ENCODE measurements at regions of chr10 and their contacts with region 1.

Region 1: DNA sequence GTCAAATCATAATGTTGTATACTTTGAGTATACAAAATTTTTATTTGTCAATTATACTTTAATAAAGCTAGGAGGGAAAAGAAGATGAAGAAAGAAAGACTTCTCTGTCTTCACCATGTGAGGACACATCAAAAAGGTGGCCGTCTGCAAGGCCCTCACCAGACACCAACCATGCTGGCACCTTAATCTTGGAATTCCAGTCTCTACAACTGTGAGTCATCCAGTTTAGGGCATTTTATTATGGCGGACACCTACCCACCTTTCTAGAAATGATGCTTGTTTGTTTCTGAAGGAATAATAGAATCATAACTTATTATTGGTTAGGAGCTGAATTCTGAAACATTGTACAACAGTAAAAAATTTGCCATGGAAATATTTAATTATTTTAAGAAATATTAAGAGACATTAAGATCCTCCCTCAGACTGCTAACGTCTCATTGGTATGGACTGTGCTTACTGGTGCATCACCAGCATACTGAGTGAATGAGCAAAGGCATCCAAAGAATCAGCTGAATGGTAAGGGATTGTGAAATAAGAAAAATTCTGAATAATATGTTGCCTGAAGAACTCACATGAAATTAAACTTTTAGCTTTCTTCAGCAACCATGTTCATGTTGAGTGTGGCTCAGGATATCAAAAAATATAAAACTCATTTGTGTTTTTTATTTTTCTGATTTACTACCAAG is 536.6 kb downstream of the HTR7 start:
- DNase-seq: peak; percentile 71
- ATAC-seq: peak; percentile 92
- H3K4me3 ChIP-seq: no peak overlapping the region
- H3K27ac ChIP-seq: no peak overlapping the region; the same call in 1 of the 2 replicates
- H3K4me1 ChIP-seq: peaks cover 7% of the 10 kb centered on the region
- H3K27me3 ChIP-seq: no peaks in the 10 kb centered on the region
- CTCF ChIP-seq: no peak
- POLR2A ChIP-seq: no peak
- RAD21 ChIP-seq: no peak

Region 2: GRCh38 chr10:90344226-90344625 is 23.0 kb after region 1 on chr10:
- CTCF ChIA-PET with region 1: no interaction called
- POLR2A ChIA-PET with region 1: no interaction called
- dilution Hi-C with region 1: no loop called
- in situ Hi-C with region 1: no loop called
- intact Hi-C with region 1: no loop called
- DNase-seq: no peak
- ATAC-seq: no peak
- H3K4me3 ChIP-seq: no peak overlapping the region
- H3K27ac ChIP-seq: no peak overlapping the region
- H3K4me1 ChIP-seq: no peaks in the 10 kb centered on the region
- H3K27me3 ChIP-seq: peaks cover 8% of the 10 kb centered on the region
- CTCF ChIP-seq: no peak
- POLR2A ChIP-seq: no peak
- RAD21 ChIP-seq: no peak

Region 3: DNA sequence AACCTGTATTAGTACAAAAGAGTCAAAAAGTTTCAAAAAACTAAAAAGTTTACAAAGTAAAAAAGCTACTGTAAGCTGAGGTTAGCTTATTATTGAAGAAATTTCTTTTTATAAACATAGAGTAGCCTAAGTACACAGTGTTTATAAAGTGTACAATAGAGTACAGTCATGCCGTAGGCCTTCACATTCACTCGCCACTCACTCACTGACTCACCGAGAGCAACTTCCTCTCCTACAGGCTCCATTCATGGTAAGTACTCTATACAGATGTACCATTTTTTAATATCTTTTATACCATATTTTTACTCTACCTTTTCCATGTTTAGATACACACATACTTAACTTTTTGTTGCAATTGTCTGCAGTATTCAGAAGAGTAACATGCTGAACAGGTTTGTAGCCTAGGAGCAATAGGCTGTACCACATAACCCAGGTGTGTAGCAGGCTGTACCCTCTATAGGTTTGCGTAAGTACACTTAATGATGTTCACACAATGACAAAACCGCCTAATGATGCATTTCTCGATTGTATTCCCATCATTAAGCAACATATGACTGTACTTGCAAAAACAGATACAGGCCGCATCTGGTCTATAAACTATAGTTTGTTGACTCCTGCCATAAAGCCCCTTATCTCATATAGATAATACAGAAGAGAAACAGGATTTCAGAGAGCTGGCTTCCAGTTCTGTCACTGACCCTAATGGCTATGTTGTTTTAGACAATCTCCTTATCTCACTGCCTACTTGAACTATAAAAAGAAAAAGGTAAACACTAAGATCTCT is 97.8 kb after region 1 on chr10:
- CTCF ChIA-PET with region 1: no interaction called
- POLR2A ChIA-PET with region 1: no interaction called
- dilution Hi-C with region 1: no loop called
- in situ Hi-C with region 1: no loop called
- intact Hi-C with region 1: loop called (anchors 5 kb)
- DNase-seq: peak; percentile 97
- ATAC-seq: peak; percentile 99
- H3K4me3 ChIP-seq: no peak overlapping the region
- H3K27ac ChIP-seq: no peak overlapping the region
- H3K4me1 ChIP-seq: peaks cover 9% of the 10 kb centered on the region
- H3K27me3 ChIP-seq: no peaks in the 10 kb centered on the region
- CTCF ChIP-seq: no peak
- POLR2A ChIP-seq: no peak
- RAD21 ChIP-seq: no peak

Measured in IMR-90 (cell line).